ENCODE measurements at regions of chr16 and their contacts with region 1.

Region 1: DNA sequence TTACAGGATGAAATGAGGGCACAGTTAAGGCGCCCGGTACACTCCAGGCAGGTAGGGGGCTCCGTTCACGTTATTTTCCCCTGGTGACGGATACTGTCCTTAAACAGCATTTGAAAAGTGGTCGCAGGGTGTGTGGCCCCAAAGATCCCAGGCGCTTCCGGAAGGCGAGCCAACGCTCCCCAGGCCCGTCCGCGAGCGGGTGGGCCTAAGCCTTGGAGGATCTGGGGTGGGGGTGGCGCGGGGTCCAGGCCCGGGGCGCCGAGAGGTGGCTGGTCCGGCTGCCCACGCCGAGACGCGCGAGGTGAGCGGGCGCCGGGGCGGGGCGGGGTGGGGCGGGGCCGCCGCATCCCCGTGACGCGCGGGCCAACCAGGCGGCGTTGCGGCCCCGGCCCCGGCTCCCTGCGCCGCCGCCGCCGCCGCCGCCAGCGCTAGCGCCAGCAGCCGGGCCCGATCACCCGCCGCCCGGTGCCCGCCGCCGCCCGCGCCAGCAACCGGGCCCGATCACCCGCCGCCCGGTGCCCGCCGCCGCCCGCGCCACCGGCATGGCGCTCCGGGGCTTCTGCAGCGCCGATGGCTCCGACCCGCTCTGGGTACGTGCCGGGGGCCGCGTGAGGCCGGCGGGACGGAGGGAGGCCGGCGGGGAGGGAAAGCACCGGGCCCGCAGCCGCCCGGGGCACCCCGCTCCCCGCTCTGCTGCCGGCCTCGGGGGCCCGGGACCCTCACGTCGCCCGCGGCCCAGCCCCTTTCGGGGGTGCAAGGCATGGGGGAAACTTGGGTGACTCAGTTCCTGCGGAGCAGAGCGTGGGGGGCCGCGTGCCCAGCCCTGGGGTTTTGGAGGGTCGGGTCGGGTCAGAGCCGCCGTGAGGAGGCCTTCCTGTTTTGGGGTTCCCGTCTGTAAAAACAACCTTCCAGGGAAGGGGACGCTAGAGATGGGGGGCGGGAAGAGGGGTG is at the start of gene ABCC1:
- DNase-seq: peak; percentile 34
- H3K4me3 Mint-ChIP-seq: peak within 1 kb of the TSS; percentile 99
- H3K27ac Mint-ChIP-seq: peak within 1 kb of the TSS; percentile 100
- H3K4me1 Mint-ChIP-seq: peaks cover 62% of the 10 kb centered on the region
- H3K27me3 Mint-ChIP-seq: peaks cover 2% of the 10 kb centered on the region
- total RNA-seq, gene ABCC1: 102 and 108 TPM in 2 replicates

Region 2: GRCh38 chr16:15899538-15900100 is 49.9 kb before region 1 on chr16:
- intact Hi-C with region 1: loop called (anchors 2 kb)
- DNase-seq: peak; percentile 54
- H3K4me3 Mint-ChIP-seq: peak overlapping the region; percentile 46
- H3K27ac Mint-ChIP-seq: peak overlapping the region; percentile 6
- H3K4me1 Mint-ChIP-seq: peaks cover 33% of the 10 kb centered on the region
- H3K27me3 Mint-ChIP-seq: peaks cover 4% of the 10 kb centered on the region

Region 3: GRCh38 chr16:15932939-15933338 is 16.5 kb before region 1 on chr16:
- intact Hi-C with region 1: no loop called
- DNase-seq: no peak
- H3K4me3 Mint-ChIP-seq: no peak overlapping the region
- H3K27ac Mint-ChIP-seq: no peak overlapping the region
- H3K4me1 Mint-ChIP-seq: no peaks in the 10 kb centered on the region
- H3K27me3 Mint-ChIP-seq: peaks cover 11% of the 10 kb centered on the region

Region 4: GRCh38 chr16:15996432-15997109 is 47.1 kb after region 1 on chr16:
- intact Hi-C with region 1: loop called (anchors 2 kb)
- DNase-seq: no peak
- H3K4me3 Mint-ChIP-seq: no peak overlapping the region
- H3K27ac Mint-ChIP-seq: peak overlapping the region; percentile 55
- H3K4me1 Mint-ChIP-seq: peaks cover 47% of the 10 kb centered on the region
- H3K27me3 Mint-ChIP-seq: no peaks in the 10 kb centered on the region

Region 5: GRCh38 chr16:16025214-16025968 is 75.9 kb after region 1 on chr16:
- intact Hi-C with region 1: loop called (anchors 2 kb)
- DNase-seq: peak; percentile 48
- H3K4me3 Mint-ChIP-seq: peak overlapping the region; percentile 54
- H3K27ac Mint-ChIP-seq: peak overlapping the region; percentile 91
- H3K4me1 Mint-ChIP-seq: peaks cover 30% of the 10 kb centered on the region
- H3K27me3 Mint-ChIP-seq: no peaks in the 10 kb centered on the region